AG04449 (cell line): ENCODE measurements at regions of chr22 and their contacts with region 1.

Region 1: DNA sequence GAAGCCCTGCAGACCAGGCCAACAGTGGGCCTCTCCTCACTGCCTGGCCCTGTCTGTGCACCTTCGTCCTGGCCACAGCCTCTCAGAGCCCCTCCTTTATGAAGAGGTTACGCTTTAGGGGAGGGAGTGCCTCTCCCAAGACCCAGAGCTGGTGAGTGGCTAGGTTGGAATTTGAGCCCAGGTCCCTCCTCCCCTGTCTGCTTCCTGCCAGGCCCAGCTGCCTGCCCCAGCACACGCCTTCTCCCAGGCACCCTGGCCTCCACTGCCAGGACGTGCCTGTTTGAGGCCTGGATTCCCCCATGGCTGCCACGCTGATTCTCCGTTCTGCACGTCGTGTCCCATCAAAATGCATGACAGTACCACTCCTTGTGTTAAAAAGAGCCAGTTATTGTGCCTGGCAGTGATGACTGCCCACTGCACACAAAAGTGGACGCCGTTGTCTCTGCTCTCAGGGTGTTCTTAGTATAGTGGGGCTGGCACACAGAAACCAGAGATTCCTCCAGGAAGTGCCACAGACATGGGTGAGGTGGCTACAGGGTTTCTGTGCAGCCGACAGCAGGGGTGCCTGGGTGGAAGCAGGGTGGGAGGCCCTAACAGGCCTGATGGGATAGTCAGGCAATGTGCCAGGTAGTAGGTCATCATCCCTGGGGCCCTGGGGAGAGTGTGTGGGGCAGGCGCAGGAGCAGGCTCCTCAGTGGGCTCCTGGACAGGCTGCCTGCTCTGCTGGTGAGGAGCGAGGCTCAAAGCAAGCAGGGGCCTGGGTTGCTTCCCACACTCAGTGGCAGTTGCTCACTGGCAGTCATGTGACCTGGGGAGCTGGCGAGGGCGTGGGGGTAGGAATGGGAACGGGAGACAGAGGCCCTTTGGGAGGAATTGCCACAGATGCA is 24.1 kb downstream of the MED15 start:
- DNase-seq: no peak
- H3K4me3 ChIP-seq: no peak overlapping the region
- CTCF ChIP-seq: no peak

Region 2: GRCh38 chr22:20507253-20508066 is 24.1 kb before region 1 on chr22 and contains the start of gene MED15:
- CTCF ChIA-PET with region 1: interaction called, 7 read pairs
- POLR2A ChIA-PET with region 1: interaction called, 27 read pairs
- DNase-seq: no peak
- H3K4me3 ChIP-seq: peak within 1 kb of the TSS; percentile 95
- CTCF ChIP-seq: no peak

Region 3: GRCh38 chr22:20650294-20650701 is 118.7 kb after region 1 on chr22:
- CTCF ChIA-PET with region 1: no interaction called
- POLR2A ChIA-PET with region 1: no interaction called
- DNase-seq: no peak
- H3K4me3 ChIP-seq: no peak overlapping the region
- CTCF ChIP-seq: no peak